ENCODE measurements at regions of chr5 and their contacts with region 1.

Region 1: DNA sequence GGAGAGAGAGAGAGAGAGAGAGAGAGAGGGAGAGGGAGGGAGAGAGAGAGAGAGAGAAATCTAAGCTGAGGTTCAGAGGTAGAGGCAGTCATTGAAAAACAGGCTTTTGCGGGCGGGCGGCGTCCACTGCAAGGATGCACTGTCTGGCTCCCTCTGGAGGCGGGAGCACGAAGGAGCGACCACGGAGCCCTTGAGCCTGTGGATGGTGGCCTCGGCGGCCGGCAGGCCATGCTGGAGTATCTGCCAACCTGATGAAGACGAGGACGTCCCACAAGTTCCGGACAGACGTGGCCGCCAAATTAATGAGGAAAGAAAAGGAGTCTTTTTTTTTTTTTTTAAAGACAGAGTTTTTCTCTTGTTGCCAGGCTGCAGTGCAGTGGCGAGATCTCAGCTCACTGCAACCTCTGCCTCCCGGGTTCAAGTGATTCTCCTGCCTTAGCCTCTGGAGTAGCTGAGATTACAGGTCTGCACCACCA is 2.2 kb upstream of the CCDC125 start:
- H3K4me3 Mint-ChIP-seq: no peak overlapping the region
- H3K27ac Mint-ChIP-seq: no peak overlapping the region
- H3K4me1 Mint-ChIP-seq: peaks cover 16% of the 10 kb centered on the region
- H3K27me3 Mint-ChIP-seq: no peaks in the 10 kb centered on the region

Region 2: GRCh38 chr5:69042915-69043658 is 291.7 kb before region 1 on chr5:
- intact Hi-C with region 1: loop called (anchors 2 kb)
- H3K4me3 Mint-ChIP-seq: peak overlapping the region; percentile 71
- H3K27ac Mint-ChIP-seq: peak overlapping the region; percentile 60
- H3K4me1 Mint-ChIP-seq: peaks cover 9% of the 10 kb centered on the region
- H3K27me3 Mint-ChIP-seq: no peaks in the 10 kb centered on the region

Region 3: GRCh38 chr5:69271376-69271775 is 63.5 kb before region 1 on chr5:
- intact Hi-C with region 1: loop called (anchors 10 kb)
- H3K4me3 Mint-ChIP-seq: no peak overlapping the region
- H3K27ac Mint-ChIP-seq: peak overlapping the region; percentile 55
- H3K4me1 Mint-ChIP-seq: peaks cover 8% of the 10 kb centered on the region
- H3K27me3 Mint-ChIP-seq: no peaks in the 10 kb centered on the region

Measured in dendritic cell treated with granulocyte-macrophage colony-stimulating factor and Interleukin-4, amounts not matched to agents 40 ng/mL and 50 ng/mL, for 4 days (primary cell).